PC-3 (cell line): ENCODE measurements at regions of chr1 and their contacts with region 1.

Region 1: GRCh38 chr1:192808518-192809306 is at the start of gene RGS2:
- DNase-seq: peak; percentile 95
- ATAC-seq: peak; percentile 73
- H3K4me3 ChIP-seq: peak within 1 kb of the TSS; percentile 86
- H3K27ac ChIP-seq: peak within 1 kb of the TSS; percentile 73
- H3K4me1 ChIP-seq: peaks cover 26% of the 10 kb centered on the region
- H3K27me3 ChIP-seq: no peaks in the 10 kb centered on the region
- CTCF ChIP-seq: peak; percentile 50
- total RNA-seq, gene RGS2: 114 and 163 TPM in 2 replicates

Region 2: GRCh38 chr1:192609110-192610079 is 199.3 kb before region 1 on chr1:
- CTCF ChIA-PET with region 1: no interaction called
- POLR2A ChIA-PET with region 1: no interaction called
- intact Hi-C with region 1: loop called (anchors 1 kb)
- DNase-seq: no peak
- ATAC-seq: no peak
- H3K4me3 ChIP-seq: no peak overlapping the region
- H3K27ac ChIP-seq: no peak overlapping the region
- H3K4me1 ChIP-seq: no peaks in the 10 kb centered on the region
- H3K27me3 ChIP-seq: no peaks in the 10 kb centered on the region
- CTCF ChIP-seq: no peak

Region 3: DNA sequence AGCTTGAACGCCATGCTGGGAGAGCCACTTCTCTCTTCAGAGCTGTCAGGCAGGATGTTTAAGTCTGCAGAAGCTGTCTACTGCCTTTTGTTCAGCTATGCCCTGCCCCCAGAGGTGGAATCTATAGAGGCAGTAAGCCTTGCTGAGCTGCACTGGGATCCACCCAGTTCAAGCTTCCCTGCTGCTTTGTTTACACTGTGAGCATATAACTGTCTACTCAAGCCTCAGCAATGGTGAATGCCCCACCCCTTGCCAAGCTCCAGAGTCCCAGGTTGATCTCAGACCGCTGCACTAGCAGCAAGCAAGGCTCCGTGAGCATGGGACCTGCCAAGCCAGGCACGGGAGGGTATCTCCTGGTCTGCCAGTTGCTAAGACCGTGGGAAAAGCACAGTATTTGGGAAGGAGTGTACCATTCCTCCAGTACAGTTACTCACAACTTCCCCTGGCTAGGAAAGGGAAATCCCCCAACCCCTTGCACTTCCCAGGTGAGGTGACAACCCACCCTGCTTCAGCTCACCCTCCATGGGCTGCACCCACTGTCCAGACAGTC is 140.2 kb before region 1 on chr1:
- CTCF ChIA-PET with region 1: no interaction called
- POLR2A ChIA-PET with region 1: interaction called, 4 read pairs
- intact Hi-C with region 1: loop called (anchors 2 kb)
- DNase-seq: peak; percentile 83
- ATAC-seq: peak; percentile 96
- H3K4me3 ChIP-seq: peak overlapping the region; percentile 38; the same call in 1 of the 2 replicates
- H3K27ac ChIP-seq: peak overlapping the region; percentile 96
- H3K4me1 ChIP-seq: peaks cover 22% of the 10 kb centered on the region
- H3K27me3 ChIP-seq: no peaks in the 10 kb centered on the region
- CTCF ChIP-seq: no peak

Region 4: DNA sequence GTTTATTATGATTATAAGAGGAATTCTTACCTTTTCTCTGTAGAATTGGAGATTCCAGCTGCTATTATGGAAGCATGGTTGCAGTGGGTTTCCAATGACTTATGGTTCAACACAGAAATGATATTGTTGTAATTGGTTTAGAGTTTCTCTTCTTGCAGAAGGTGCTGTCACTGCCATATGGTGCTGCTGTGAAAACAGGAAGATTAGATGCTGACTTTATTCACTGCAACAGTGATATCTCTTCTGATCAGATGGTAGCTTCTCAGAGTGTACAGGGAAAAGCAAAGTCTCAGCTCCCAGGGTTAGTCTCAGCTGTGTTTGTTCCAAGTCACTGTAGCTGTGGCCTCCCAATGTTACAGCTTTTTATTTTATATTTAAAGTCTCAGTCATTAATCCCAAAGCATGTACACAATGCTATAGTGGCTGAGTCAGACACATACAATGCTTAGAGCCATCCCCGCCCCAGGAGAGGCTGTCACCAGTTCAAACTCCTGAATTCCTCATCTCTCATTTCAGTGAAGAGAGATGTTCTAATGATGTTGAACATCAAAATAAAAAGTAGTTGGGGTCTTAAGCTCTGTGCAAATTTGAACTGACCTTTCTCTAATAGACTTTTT is 42.6 kb before region 1 on chr1:
- CTCF ChIA-PET with region 1: no interaction called
- POLR2A ChIA-PET with region 1: no interaction called
- intact Hi-C with region 1: loop called (anchors 1 kb)
- DNase-seq: peak; percentile 70
- ATAC-seq: peak; percentile 84
- H3K4me3 ChIP-seq: no peak overlapping the region
- H3K27ac ChIP-seq: no peak overlapping the region
- H3K4me1 ChIP-seq: peaks cover 32% of the 10 kb centered on the region
- H3K27me3 ChIP-seq: no peaks in the 10 kb centered on the region
- CTCF ChIP-seq: no peak

Region 5: GRCh38 chr1:193019442-193020026 is 210.8 kb after region 1 on chr1:
- CTCF ChIA-PET with region 1: interaction called, 10 read pairs
- POLR2A ChIA-PET with region 1: no interaction called
- intact Hi-C with region 1: loop called (anchors 1 kb)
- DNase-seq: peak; percentile 75
- ATAC-seq: peak; percentile 63
- H3K4me3 ChIP-seq: no peak overlapping the region
- H3K27ac ChIP-seq: peak overlapping the region; percentile 65
- H3K4me1 ChIP-seq: peaks cover 10% of the 10 kb centered on the region
- H3K27me3 ChIP-seq: no peaks in the 10 kb centered on the region
- CTCF ChIP-seq: peak; percentile 67